PC-3 (cell line): ENCODE measurements at regions of chr1 and their contacts with region 1.

Region 1: GRCh38 chr1:23959041-23959460 is 577 bp upstream of the PNRC2 start:
- DNase-seq: peak; percentile 83
- ATAC-seq: peak; percentile 63
- H3K4me3 ChIP-seq: peak overlapping the region; percentile 94
- H3K27ac ChIP-seq: peak overlapping the region; percentile 97
- H3K4me1 ChIP-seq: peaks cover 41% of the 10 kb centered on the region
- H3K27me3 ChIP-seq: no peaks in the 10 kb centered on the region
- CTCF ChIP-seq: 0 out of 2 replicates have a peak, but pooled peaks have one; percentile 17

Region 2: GRCh38 chr1:23790696-23791515 is 168.1 kb before region 1 on chr1 and contains the start of gene LYPLA2:
- CTCF ChIA-PET with region 1: no interaction called
- POLR2A ChIA-PET with region 1: interaction called, 14 read pairs
- intact Hi-C with region 1: no loop called
- DNase-seq: peak; percentile 87
- ATAC-seq: peak; percentile 73
- H3K4me3 ChIP-seq: peak within 1 kb of the TSS; percentile 100
- H3K27ac ChIP-seq: peak within 1 kb of the TSS; percentile 82
- H3K4me1 ChIP-seq: peaks cover 24% of the 10 kb centered on the region
- H3K27me3 ChIP-seq: no peaks in the 10 kb centered on the region
- CTCF ChIP-seq: no peak
- total RNA-seq, gene LYPLA2: 120 and 142 TPM in 2 replicates

Region 3: DNA sequence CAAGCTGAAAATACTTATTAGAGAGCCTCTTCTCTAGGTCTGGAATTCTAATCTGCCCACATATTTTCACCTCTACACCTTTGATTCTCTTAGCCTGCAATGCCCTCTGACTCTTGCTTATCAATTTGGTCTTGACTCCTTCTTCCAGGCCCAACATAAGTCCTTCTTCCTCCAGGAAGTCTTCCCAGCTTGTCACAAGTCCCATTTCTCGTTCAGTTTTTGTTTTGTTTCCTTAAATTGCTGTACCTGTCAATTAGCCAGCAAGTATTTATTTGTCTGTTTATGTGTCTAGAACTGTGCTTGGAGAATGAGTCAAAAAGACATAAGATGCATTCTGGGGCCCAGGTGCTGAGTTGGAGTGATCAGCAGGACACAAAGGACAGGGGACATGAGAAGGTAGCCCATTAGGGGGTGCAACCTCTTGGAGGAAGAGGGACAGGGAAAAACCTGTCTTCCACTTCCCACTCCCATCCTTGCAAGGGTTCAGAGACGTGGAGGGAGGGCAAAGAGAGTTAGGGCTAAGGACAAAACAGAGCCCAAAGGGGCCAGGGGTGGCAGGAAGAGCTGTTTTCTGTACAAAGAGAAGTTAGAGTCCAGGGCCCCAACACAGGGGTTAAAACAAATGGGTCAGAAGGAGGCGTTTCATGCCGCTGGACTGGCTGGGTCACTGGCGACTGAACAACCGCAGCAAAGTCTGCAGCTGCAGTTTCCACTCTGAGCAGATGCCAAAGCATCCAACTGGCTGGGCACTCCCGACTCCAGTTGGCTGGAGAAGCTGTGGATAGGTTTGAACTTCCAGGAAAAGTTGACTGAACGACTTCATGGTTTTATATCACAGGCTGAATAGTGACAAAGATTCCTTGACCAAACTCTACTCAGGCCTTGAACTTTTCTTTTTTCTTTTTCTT is 35.2 kb before region 1 on chr1:
- CTCF ChIA-PET with region 1: no interaction called
- POLR2A ChIA-PET with region 1: no interaction called
- intact Hi-C with region 1: loop called (anchors 5 kb)
- DNase-seq: no peak
- ATAC-seq: no peak
- H3K4me3 ChIP-seq: no peak overlapping the region
- H3K27ac ChIP-seq: no peak overlapping the region
- H3K4me1 ChIP-seq: peaks cover 24% of the 10 kb centered on the region
- H3K27me3 ChIP-seq: no peaks in the 10 kb centered on the region
- CTCF ChIP-seq: no peak

Region 4: DNA sequence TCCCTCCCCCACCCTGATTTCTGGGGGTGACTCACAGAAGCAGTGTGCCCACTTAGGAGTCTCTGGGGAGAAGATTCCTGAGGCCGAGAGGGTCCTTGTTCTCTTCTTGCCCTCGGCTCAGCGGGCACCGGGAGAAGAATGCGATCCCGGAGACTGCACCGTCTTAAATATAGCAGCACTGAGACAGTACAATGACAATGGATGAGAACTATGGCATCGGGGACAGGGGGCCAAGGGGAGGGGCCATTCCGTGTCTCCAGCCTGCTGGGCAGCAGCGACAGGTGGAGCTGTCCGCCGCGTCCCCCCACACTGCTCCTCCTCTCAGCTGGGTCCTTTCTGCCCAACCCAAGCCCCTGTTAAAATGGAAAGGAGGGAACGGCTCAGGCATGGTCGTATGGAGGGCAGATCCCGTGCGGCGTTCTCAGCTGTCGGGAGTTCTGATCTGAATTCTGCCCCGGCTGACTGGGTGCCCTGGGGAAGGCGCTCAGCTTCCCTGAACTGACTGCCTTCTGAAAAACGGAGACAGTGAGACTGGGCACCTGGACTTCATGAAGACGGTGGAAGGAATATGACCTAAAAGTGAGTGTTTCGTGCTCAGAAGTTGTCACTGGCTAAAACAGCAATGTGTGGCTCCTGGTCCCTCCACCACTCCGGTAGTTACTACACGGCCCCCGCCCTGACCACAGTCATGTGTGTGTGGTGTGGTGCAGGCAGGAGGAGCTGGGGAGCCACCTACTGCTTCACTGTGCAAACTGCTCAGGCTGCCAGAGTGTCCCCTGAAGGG is 153.1 kb after region 1 on chr1 and contains the start of gene MYOM3:
- CTCF ChIA-PET with region 1: no interaction called
- POLR2A ChIA-PET with region 1: no interaction called
- intact Hi-C with region 1: loop called (anchors 10 kb)
- DNase-seq: peak; percentile 74
- ATAC-seq: peak; percentile 93
- H3K4me3 ChIP-seq: peak within 1 kb of the TSS; percentile 43; the same call in 1 of the 2 replicates
- H3K27ac ChIP-seq: no peak within 1 kb of the TSS
- H3K4me1 ChIP-seq: peaks cover 24% of the 10 kb centered on the region
- H3K27me3 ChIP-seq: no peaks in the 10 kb centered on the region
- CTCF ChIP-seq: peak; percentile 80
- total RNA-seq, gene MYOM3: 0.04 and 0.12 TPM in 2 replicates